PC-9 (cell line): ENCODE measurements at regions of chr9 and their contacts with region 1.

Region 1: GRCh38 chr9:92669890-92670708 is at the start of gene IPPK:
- DNase-seq: peak; percentile 95 to 99
- H3K4me3 ChIP-seq: peak within 1 kb of the TSS; percentile 95
- H3K27ac ChIP-seq: peak within 1 kb of the TSS; percentile 95
- H3K4me1 ChIP-seq: peaks cover 19% of the 10 kb centered on the region; the same call in 1 of the 2 replicates
- H3K27me3 ChIP-seq: no peaks in the 10 kb centered on the region
- CTCF ChIP-seq: no peak
- total RNA-seq, gene IPPK: 12.3 TPM in 2 replicates

Region 2: GRCh38 chr9:92115071-92115858 is 554.8 kb before region 1 on chr9 and contains the start of gene SPTLC1:
- CTCF ChIA-PET with region 1: no interaction called
- POLR2A ChIA-PET with region 1: interaction called, 18 read pairs
- intact Hi-C with region 1: no loop called
- DNase-seq: peak; percentile 80 to 95
- H3K4me3 ChIP-seq: peak within 1 kb of the TSS; percentile 81
- H3K27ac ChIP-seq: peak within 1 kb of the TSS; percentile 46
- H3K4me1 ChIP-seq: peaks cover 20% of the 10 kb centered on the region; the same call in 1 of the 2 replicates
- H3K27me3 ChIP-seq: no peaks in the 10 kb centered on the region
- CTCF ChIP-seq: no peak
- total RNA-seq, gene SPTLC1: 80.9 and 103 TPM in 2 replicates

Region 3: GRCh38 chr9:92151691-92152393 is 518.3 kb before region 1 on chr9:
- CTCF ChIA-PET with region 1: no interaction called
- POLR2A ChIA-PET with region 1: no interaction called
- intact Hi-C with region 1: loop called (anchors 2 kb)
- DNase-seq: peak; percentile 96 to 97
- H3K4me3 ChIP-seq: peak overlapping the region; percentile 11; the same call in 1 of the 2 replicates
- H3K27ac ChIP-seq: peak overlapping the region; percentile 67
- H3K4me1 ChIP-seq: peaks cover 48% of the 10 kb centered on the region
- H3K27me3 ChIP-seq: no peaks in the 10 kb centered on the region
- CTCF ChIP-seq: no peak

Region 4: GRCh38 chr9:92590377-92590776 is 79.7 kb before region 1 on chr9:
- CTCF ChIA-PET with region 1: no interaction called
- POLR2A ChIA-PET with region 1: no interaction called
- intact Hi-C with region 1: no loop called
- DNase-seq: no peak
- H3K4me3 ChIP-seq: no peak overlapping the region
- H3K27ac ChIP-seq: no peak overlapping the region
- H3K4me1 ChIP-seq: no peaks in the 10 kb centered on the region
- H3K27me3 ChIP-seq: no peaks in the 10 kb centered on the region
- CTCF ChIP-seq: no peak

Region 5: DNA sequence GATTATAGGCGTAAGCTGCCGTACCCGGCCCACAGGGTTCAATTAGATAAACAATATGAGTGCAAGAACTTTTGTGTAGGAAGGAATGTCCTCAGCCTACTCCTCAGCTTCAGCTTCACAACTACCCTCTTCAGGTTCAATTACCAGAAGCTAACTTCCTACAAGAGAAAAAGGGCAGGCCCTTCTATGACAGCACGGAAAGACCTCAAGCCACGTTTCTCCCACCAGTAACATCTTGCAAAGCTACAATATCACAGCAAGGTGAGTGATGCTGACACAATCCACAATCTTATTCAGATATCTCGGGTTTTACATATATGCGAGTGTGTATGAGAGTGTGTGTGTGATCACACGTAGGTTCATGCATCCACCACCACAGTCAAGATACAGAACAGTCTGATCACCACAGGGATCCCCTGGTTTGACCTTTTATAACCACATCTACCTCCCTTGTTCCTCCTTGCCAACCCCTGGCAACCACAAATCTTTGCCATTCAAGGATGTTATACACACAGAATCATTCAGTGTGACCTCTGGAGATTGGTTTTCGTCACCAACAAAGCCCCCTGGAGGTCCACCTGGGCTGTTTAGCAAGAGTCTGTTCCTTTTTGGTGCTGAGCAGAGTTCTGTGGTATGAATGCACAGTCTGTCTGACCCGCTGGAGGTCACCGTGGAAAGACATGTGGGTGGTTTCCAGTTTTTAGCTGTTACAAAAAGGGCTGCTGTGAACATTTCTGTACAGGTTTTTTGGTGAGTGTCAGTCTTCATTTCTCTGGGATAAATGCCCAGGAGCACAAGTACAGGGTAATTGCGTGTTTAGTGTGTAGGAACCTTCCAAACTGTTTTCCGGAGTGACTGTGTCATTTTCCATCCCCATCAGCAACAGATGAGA is 38.4 kb before region 1 on chr9:
- CTCF ChIA-PET with region 1: no interaction called
- POLR2A ChIA-PET with region 1: no interaction called
- intact Hi-C with region 1: no loop called
- DNase-seq: no peak
- H3K4me3 ChIP-seq: no peak overlapping the region
- H3K27ac ChIP-seq: no peak overlapping the region
- H3K4me1 ChIP-seq: no peaks in the 10 kb centered on the region
- H3K27me3 ChIP-seq: no peaks in the 10 kb centered on the region
- CTCF ChIP-seq: no peak

Region 6: DNA sequence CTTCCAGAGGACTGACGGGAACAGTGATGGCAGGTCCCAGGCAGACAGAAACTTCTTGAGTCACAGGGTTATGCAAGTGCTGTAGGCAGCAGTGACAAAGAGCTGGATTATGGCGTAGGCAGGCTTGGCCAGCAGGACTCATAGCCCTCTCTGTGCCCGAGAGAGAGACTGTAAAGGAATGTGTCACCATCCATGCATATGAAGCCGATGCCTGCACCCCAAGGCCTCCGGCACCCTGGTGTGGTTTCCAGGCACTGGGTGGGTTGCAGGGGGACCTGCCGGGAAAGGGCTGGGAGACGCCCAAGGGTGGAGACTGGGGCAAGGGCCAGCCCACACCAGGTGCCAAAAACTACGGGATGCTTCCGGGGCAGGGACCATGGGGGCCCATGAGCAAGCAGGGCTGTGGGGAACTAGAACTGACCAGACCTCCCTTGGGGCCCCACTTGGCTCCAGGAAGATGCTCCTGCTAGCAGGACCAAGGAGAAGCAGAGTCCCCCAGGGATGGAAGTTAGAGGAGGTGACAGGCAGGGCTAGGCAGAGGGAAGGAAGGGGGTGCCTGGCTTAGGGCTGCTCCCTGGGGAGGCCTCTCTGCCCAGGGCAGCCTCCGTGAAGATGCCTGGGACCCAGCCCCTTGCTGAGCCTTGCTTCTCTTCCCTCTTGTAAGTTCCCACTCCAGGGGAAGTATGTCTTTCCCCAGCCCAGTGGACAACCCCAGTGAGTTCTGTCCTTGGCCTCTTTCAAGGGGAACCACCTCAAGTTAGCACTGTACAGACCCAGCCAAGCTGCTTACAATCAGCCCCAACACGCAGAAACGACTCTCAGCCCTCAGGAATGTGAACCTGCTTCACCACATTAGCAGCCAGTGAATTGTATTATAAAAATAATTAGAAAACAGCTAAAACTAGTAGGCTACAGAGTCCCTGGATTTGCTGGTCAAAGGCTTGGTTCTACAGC is 10.3 kb after region 1 on chr9:
- CTCF ChIA-PET with region 1: interaction called, 3 read pairs
- POLR2A ChIA-PET with region 1: no interaction called
- intact Hi-C with region 1: loop called (anchors 1 kb)
- DNase-seq: peak; percentile 30 to 37
- H3K4me3 ChIP-seq: no peak overlapping the region
- H3K27ac ChIP-seq: no peak overlapping the region
- H3K4me1 ChIP-seq: no peaks in the 10 kb centered on the region
- H3K27me3 ChIP-seq: no peaks in the 10 kb centered on the region
- CTCF ChIP-seq: no peak

Region 7: DNA sequence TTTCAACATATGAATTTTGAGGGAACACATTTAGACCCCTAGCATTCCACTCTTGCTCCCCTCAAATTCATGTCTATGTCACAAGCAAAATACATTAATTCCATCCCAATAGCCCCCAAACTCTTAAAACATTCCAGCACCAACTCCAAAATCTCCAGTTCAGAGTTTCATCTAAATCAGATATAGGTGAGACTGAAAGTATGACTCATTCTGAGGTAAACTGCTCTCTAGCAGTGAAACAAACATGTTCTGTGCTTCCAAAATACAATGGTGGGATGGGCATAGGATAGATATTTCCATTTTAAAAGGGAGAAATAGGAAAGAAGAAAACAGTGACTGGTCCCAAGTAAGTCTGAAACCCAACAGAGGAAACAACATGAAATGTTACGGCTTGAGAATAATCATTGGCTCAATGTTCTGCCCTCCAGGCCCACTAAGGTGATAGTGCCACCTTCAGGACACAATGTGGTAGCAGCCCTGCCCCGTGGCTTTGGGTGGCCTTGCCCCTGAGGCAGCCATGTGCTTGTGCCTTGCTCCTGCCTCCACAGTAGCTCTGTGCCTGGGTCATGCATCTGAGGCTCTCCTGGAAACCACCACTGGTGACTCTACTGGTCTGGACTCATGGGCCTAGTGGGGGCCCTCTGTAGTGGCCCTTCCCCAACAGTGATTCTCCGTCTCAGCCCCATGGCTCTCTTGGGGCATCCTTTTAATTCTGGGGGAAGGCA is 36.3 kb after region 1 on chr9:
- CTCF ChIA-PET with region 1: no interaction called
- POLR2A ChIA-PET with region 1: interaction called, 3 read pairs
- intact Hi-C with region 1: loop called (anchors 1 kb)
- DNase-seq: peak in 1 of 2 experiments; percentile 53
- H3K4me3 ChIP-seq: no peak overlapping the region
- H3K27ac ChIP-seq: peak overlapping the region; percentile 53
- H3K4me1 ChIP-seq: 0 out of 2 replicates have a peak, but pooled peaks cover 5% of the 10 kb centered on the region
- H3K27me3 ChIP-seq: no peaks in the 10 kb centered on the region
- CTCF ChIP-seq: peak; percentile 44

Region 8: GRCh38 chr9:92790542-92791527 is 120.7 kb after region 1 on chr9:
- CTCF ChIA-PET with region 1: no interaction called
- POLR2A ChIA-PET with region 1: interaction called, 4 read pairs
- intact Hi-C with region 1: loop called (anchors 2 kb)
- DNase-seq: peak; percentile 65 to 84
- H3K4me3 ChIP-seq: no peak overlapping the region
- H3K27ac ChIP-seq: no peak overlapping the region
- H3K4me1 ChIP-seq: no peaks in the 10 kb centered on the region
- H3K27me3 ChIP-seq: no peaks in the 10 kb centered on the region
- CTCF ChIP-seq: peak; percentile 91

Region 9: DNA sequence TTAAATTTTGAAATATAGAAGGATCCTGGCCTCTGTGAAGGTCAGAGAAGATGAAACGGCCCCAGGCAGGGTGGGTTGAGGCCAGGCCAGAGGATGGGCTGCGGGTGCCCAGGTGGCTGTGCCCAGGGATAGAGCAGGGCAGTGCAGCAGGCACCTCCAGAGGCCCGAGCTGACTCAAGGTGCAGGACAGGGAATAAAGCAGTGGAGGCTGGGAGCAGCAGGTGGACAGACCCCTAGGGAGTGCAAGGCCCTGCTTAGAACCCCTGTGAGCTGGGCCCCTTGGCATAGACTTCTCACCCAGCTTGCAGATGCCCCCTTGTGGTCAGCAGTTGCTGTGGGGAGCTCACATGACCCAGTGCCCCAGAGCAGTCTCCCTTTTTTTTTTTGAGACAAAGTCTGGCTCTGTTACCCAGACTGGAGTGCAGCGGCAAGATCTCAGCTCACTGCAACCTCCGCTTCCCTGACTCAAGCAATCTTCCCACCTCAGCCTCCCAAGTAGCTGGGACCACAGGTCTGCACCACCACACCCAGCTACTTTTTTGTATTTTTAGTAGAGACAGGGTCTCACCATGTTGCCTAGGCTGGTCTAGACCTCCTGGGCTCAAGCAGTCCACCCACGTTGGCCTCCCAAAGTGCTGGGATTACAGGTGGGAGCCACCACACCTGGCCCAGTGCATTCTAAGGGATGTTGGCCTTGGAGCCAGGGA is 632.6 kb after region 1 on chr9:
- CTCF ChIA-PET with region 1: no interaction called
- POLR2A ChIA-PET with region 1: no interaction called
- intact Hi-C with region 1: no loop called
- DNase-seq: peak; percentile 61 to 77
- H3K4me3 ChIP-seq: no peak overlapping the region
- H3K27ac ChIP-seq: no peak overlapping the region
- H3K4me1 ChIP-seq: no peaks in the 10 kb centered on the region
- H3K27me3 ChIP-seq: no peaks in the 10 kb centered on the region
- CTCF ChIP-seq: peak; percentile 84